Posterior vena cava (tissue), 2 donors: ENCODE measurements at regions of chr1 and their contacts with region 1.

Region 1: GRCh38 chr1:40939320-40940059 is 40.0 kb upstream of the CTPS1 start:
- DNase-seq: no peak

Region 2: DNA sequence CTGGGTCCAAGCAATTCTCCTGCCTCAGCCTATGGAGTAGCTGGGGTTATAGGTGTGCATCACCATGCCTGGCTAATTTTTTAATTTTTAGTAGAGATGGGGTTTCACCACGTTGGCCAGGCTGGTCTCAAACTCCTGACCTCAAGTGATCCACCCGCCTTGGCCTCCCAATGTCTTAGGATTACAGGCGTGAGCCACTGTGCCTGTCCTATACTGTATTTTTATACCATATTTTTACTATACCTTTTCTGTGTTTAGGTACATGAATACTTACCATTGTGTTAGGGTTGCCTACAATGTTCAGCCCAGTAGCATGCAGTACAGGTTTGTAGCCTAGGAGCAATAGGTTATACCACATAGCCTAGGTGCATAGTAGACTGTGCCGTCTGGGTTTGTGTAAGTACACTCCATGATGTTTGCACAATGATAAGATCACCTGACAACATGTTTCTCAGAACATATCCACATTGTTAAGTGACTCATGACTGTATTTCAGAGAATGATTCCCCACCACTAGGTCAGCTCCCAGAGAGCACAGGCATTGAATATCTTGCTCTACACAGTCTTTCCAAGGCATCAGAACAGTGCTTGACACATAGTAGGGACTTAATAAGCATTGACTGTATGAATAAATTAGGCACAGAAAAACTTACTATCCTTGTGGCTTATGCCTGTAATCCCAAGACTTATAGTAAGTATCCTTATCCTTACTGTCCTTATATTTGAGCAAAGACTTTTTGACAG is 71.3 kb before region 1 on chr1:
- intact Hi-C with region 1: no loop called
- DNase-seq: no peak

Region 3: DNA sequence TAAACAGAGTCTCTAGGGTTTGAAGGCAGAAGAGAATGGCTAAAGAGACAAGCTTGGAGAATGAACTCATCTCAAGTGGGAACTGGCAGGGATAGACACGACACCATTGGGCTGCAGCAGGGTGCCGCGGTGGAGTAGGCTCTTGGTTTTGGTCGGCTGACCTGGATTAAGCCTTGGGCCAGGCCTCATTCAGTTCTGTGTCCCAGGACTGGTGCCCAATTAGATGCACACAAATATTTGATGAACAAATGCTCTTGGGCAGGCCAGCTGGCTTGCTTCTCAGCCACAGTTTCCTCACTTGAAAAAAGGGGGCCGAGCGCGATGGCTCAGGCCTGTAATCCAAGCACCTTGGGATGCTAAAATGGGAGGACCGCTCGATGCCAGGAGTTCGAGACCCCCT is 23.9 kb before region 1 on chr1:
- intact Hi-C with region 1: loop called in 1 of 2 experiments (anchors 1 kb)
- DNase-seq: no peak

Region 4: DNA sequence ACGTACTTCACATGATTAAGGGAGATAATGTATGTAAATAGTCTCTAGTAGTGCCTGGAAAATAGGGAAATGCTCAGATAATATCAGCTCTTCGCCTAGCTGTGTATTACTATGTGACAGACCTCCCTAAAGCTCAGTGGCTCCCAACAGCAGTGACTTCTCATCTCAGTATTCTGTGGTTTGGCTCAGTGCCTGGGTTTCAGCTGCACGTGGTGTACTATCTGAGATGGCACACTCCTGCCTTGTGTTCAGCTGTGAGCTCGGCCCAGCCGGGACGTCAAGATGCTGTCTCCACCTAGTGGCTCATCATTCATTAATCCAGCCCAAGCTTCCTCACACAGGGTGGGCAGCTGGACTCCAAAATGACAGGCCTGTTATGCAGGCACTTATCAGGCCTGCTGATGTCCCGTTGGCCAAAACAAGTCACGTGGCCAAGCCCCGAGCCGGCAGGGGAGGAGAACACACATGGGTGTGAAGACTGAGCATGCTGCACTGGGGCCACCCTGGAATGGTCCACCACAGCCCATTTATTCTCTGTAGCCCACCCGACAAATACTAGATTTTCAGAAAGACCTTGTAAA is 64.2 kb after region 1 on chr1:
- intact Hi-C with region 1: no loop called
- DNase-seq: peak; percentile 97